Ascending aorta (tissue), 2 donors: ENCODE measurements at regions of chr7 and their contacts with region 1.

Region 1: GRCh38 chr7:77798394-77799077 is at the starts of genes PHTF2 and TMEM60:
- DNase-seq: peak; percentile 97 to 99
- H3K4me3 ChIP-seq: peak within 1 kb of the TSS; percentile 88 to 90
- H3K27ac ChIP-seq: peak within 1 kb of the TSS; percentile 91 to 97
- H3K4me1 ChIP-seq: peaks cover 4 to 8% of the 10 kb centered on the region in 2 donors
- H3K27me3 ChIP-seq: no peaks in the 10 kb centered on the region
- CTCF ChIP-seq: peak; percentile 39 to 54 (median 48)
- total RNA-seq, gene PHTF2: 10.2 TPM
- total RNA-seq, gene TMEM60: not detected

Region 2: GRCh38 chr7:77696198-77697028 is 102.1 kb before region 1 on chr7 and contains the start of gene RSBN1L:
- intact Hi-C with region 1: loop called (anchors 1 kb)
- DNase-seq: peak; percentile 97 to 99
- H3K4me3 ChIP-seq: peak within 1 kb of the TSS; percentile 95 to 98
- H3K27ac ChIP-seq: peak within 1 kb of the TSS; percentile 93 to 98
- H3K4me1 ChIP-seq: peaks cover 0 to 16% of the 10 kb centered on the region in 2 donors
- H3K27me3 ChIP-seq: no peaks in the 10 kb centered on the region
- CTCF ChIP-seq: peak; percentile 38 to 49 (median 44)
- total RNA-seq, gene RSBN1L: 12.8 TPM

Region 3: GRCh38 chr7:77887567-77887966 is 89.0 kb after region 1 on chr7:
- intact Hi-C with region 1: no loop called
- DNase-seq: peak in 1 of 2 donors; percentile 70
- H3K4me3 ChIP-seq: no peak overlapping the region
- H3K27ac ChIP-seq: peak overlapping the region in 1 of 2 donors; percentile 45
- H3K4me1 ChIP-seq: peaks cover 0 to 4% of the 10 kb centered on the region in 2 donors
- H3K27me3 ChIP-seq: no peaks in the 10 kb centered on the region
- CTCF ChIP-seq: no peak

Region 4: GRCh38 chr7:77913977-77914607 is 115.6 kb after region 1 on chr7:
- intact Hi-C with region 1: loop called (anchors 2 kb)
- DNase-seq: peak in 1 of 2 donors; percentile 9
- H3K4me3 ChIP-seq: no peak overlapping the region
- H3K27ac ChIP-seq: peak overlapping the region; percentile 64 to 66
- H3K4me1 ChIP-seq: peaks cover 0 to 16% of the 10 kb centered on the region in 2 donors
- H3K27me3 ChIP-seq: no peaks in the 10 kb centered on the region
- CTCF ChIP-seq: no peak